ENCODE measurements at regions of chr7 and their contacts with region 1.

Region 1: DNA sequence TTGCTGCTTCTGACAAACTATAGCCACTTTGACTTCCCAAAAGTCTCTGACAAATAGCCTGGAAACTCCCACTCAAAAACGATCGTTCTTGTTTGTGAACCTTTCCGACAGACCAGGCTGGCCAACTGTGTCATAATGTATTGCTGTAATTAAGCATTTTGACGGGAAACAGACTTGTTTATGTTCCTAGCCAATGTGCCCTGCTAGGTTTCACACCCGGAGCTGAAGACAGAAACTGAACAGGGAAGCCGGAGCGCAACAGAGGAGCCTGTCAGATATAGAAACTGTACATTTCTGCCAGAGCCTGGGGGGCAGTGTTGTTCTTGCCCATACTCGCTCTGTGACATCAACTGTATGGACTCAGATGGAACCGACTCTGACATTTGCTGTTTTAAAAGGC is 55.3 kb upstream of the C7orf33 start:
- DNase-seq: no peak
- ATAC-seq: peak; percentile 71
- H3K4me3 Mint-ChIP-seq: peak overlapping the region; percentile 61
- H3K27ac Mint-ChIP-seq: no peak overlapping the region
- H3K4me1 Mint-ChIP-seq: peaks cover 3% of the 10 kb centered on the region
- H3K27me3 Mint-ChIP-seq: no peaks in the 10 kb centered on the region
- CTCF ChIP-seq: no peak

Region 2: GRCh38 chr7:148553979-148554378 is 18.8 kb after region 1 on chr7:
- CTCF ChIA-PET with region 1: no interaction called
- POLR2A ChIA-PET with region 1: no interaction called
- intact Hi-C with region 1: loop called (anchors 1 kb)
- DNase-seq: no peak
- ATAC-seq: no peak
- H3K4me3 Mint-ChIP-seq: no peak overlapping the region
- H3K27ac Mint-ChIP-seq: no peak overlapping the region
- H3K4me1 Mint-ChIP-seq: no peaks in the 10 kb centered on the region
- H3K27me3 Mint-ChIP-seq: peaks cover 2% of the 10 kb centered on the region
- CTCF ChIP-seq: no peak

Region 3: GRCh38 chr7:148687555-148687954 is 152.3 kb after region 1 on chr7:
- CTCF ChIA-PET with region 1: no interaction called
- POLR2A ChIA-PET with region 1: no interaction called
- intact Hi-C with region 1: no loop called
- DNase-seq: no peak
- ATAC-seq: no peak
- H3K4me3 Mint-ChIP-seq: no peak overlapping the region
- H3K27ac Mint-ChIP-seq: no peak overlapping the region
- H3K4me1 Mint-ChIP-seq: no peaks in the 10 kb centered on the region
- H3K27me3 Mint-ChIP-seq: peaks cover 4% of the 10 kb centered on the region
- CTCF ChIP-seq: no peak

Measured in activated B cell treated with CpG ODN at 0.5 μM for 24 hours (primary cell).